ENCODE measurements at regions of chr1 and their contacts with region 1.

Region 1: DNA sequence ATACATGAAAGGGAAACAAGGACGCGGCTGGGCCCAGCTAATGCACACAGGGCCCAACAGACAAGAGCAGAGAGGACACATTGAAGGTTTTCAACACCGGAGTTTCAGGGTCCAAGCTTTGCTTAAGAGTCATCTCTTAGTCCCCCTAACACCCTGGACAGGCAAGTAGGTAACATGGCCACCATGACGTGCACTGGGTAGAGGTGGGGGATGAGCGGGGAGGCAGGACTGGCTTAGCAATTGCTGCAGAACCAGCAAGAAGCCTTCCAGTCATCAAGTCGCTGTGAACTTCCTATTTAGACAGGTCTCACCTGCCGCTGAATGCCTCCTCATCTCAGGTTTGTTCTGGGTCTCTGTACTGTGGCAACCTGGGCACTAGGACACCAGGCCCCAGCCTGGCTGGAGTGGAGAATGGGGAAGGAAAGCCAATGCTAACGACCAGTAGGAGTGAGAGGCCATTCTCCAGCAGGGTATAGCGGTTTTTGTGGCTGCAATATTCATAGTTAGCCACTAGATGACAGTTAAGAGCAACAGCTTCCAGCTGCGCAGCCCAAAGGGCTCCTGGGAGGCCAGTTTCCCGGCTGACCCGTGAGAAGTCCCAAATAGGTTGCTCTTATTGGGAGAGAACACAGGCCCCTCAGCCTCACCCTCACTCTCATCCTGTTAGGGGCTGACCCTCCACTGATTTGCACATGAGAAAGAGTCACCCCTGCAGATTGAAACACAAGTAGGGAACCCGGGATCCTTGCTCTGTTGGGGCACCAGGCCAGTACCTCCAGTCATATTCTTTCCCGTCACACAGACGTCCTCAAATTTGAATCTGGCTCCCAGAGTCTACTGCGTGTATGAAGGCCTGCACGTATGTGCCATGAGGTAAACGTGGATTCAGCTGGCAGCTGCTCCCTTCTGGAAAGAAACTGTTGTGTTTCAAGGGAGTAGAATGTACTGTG is 6.0 kb upstream of the PIGC start:
- DNase-seq: peak; percentile 56
- H3K4me3 ChIP-seq: no peak overlapping the region
- H3K27ac ChIP-seq: no peak overlapping the region
- H3K4me1 ChIP-seq: peaks cover 6% of the 10 kb centered on the region
- H3K27me3 ChIP-seq: no peaks in the 10 kb centered on the region
- CTCF ChIP-seq: peak; percentile 91

Region 2: DNA sequence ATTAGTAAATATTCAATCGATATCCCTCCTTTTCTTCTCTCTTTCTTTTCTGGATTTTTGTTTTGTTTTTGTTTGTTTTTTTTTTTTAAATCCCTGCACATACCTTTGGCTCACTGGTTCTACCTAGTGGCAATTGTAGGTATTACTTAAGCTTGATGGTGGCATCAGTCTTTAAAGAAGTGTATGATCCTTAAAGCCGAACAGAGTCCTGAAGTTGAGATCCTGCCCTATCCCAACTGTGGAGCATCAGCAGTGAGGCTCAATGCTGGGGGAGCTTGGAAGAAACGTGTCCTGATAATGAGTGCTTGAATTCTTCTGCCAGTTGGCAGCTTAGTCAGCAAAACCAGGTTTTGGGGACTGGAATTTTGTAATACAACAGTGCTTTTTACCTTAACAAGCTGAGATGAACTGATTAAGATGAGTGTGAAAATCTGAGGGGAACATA is 269.9 kb after region 1 on chr1:
- intact Hi-C with region 1: loop called (anchors 5 kb)
- DNase-seq: no peak
- H3K4me3 ChIP-seq: no peak overlapping the region
- H3K27ac ChIP-seq: no peak overlapping the region
- H3K4me1 ChIP-seq: no peaks in the 10 kb centered on the region
- H3K27me3 ChIP-seq: no peaks in the 10 kb centered on the region
- CTCF ChIP-seq: peak; percentile 83

Region 3: GRCh38 chr1:172727956-172728603 is 278.2 kb after region 1 on chr1:
- intact Hi-C with region 1: loop called (anchors 5 kb)
- DNase-seq: no peak
- H3K4me3 ChIP-seq: no peak overlapping the region
- H3K27ac ChIP-seq: no peak overlapping the region
- H3K4me1 ChIP-seq: no peaks in the 10 kb centered on the region
- H3K27me3 ChIP-seq: no peaks in the 10 kb centered on the region
- CTCF ChIP-seq: peak; percentile 53